ENCODE measurements at regions of chr2 and their contacts with region 1.

Region 1: GRCh38 chr2:54106631-54107454 is 8.6 kb upstream of the ACYP2 start:
- DNase-seq: peak; percentile 84
- H3K4me3 ChIP-seq: no peak overlapping the region
- H3K27ac ChIP-seq: peak overlapping the region; percentile 50
- H3K4me1 ChIP-seq: peaks cover 72% of the 10 kb centered on the region
- CTCF ChIP-seq: peak; percentile 98

Region 2: DNA sequence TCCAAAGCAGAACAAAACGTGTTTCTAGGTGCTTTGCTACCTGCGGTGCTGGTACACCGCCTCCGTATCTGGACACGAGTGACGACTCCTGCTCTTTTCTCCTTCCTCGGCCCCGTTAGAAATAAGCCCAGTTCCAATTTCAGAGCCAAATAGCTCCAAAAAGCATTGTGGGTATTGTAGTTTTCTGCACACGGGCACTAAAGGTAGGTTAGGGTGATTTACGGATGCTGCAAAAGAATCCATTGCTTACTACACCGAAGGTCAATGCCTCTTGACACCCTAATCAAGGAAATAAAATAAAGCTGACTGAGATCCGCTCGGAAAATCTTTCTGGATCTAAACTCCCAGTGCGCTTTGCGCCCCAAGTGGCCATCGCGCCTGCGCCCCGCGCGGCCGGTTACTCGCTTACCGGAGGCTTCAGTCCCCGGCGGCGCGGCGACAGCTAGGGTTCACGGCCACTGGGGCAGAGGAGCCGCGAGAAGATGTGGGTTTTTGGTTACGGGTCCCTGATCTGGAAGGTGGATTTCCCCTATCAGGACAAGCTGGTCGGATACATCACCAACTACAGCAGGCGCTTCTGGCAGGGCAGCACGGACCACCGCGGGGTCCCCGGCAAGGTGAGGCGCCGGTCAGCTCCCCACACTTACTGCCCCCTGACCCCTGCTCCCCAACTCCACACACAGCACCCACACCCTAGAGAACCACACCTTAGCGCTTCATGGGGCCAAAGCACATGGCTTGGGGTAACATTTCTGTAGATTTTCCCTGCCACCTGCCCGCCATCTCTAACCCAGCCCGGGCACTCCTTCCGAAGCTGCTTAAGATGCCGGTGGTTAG is 339.2 kb before region 1 on chr2 and contains the start of gene CHAC2:
- CTCF ChIA-PET with region 1: no interaction called
- POLR2A ChIA-PET with region 1: interaction called, 3 read pairs
- intact Hi-C with region 1: loop called (anchors 5 kb)
- DNase-seq: peak; percentile 91
- H3K4me3 ChIP-seq: peak within 1 kb of the TSS; percentile 84
- H3K27ac ChIP-seq: peak within 1 kb of the TSS; percentile 88
- H3K4me1 ChIP-seq: peaks cover 30% of the 10 kb centered on the region
- CTCF ChIP-seq: peak; percentile 43; the same call in 1 of the 2 replicates
- total RNA-seq, gene CHAC2: 15.9 and 17.0 TPM in 2 replicates

Region 3: GRCh38 chr2:53786705-53787612 is 319.9 kb before region 1 on chr2 and contains the starts of genes ASB3 and ERLEC1:
- CTCF ChIA-PET with region 1: interaction called, 3 read pairs
- POLR2A ChIA-PET with region 1: interaction called, 6 read pairs
- intact Hi-C with region 1: loop called (anchors 5 kb)
- DNase-seq: peak; percentile 93
- H3K4me3 ChIP-seq: peak within 1 kb of the TSS; percentile 94
- H3K27ac ChIP-seq: peak within 1 kb of the TSS; percentile 75
- H3K4me1 ChIP-seq: peaks cover 38% of the 10 kb centered on the region
- CTCF ChIP-seq: no peak
- total RNA-seq, gene ASB3: 25.0 and 26.4 TPM in 2 replicates
- total RNA-seq, gene ERLEC1: 22.7 and 26.9 TPM in 2 replicates

Region 4: DNA sequence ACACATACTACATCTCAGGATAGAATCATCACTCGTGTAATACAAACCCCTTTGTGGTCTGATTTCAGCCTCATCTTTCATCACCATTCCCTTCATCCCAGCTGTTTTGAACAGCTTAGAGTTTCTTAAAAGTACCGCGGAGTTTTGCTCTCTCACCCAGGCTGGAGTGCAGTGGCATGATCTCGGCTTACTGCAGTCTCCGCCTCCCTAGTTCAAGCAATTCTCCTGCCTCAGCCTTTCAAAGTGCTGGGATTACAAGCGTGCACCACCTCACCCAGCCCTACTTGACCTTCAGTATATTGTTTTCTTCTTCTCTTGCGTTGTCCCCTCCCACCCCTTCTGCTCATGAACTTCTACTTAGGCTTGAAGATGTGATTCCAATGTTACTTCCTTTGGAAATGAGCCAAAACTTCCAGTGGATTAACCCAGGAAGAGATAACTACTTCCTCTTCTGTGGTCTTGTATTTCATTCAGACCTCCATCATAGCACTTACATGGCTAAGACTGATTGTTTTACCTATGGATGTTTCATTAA is 304.2 kb before region 1 on chr2:
- CTCF ChIA-PET with region 1: no interaction called
- POLR2A ChIA-PET with region 1: no interaction called
- intact Hi-C with region 1: no loop called
- DNase-seq: no peak
- H3K4me3 ChIP-seq: no peak overlapping the region
- H3K27ac ChIP-seq: no peak overlapping the region
- H3K4me1 ChIP-seq: no peaks in the 10 kb centered on the region
- CTCF ChIP-seq: no peak

Region 5: GRCh38 chr2:53970724-53971602 is 135.9 kb before region 1 on chr2 and contains the start of gene PSME4:
- CTCF ChIA-PET with region 1: no interaction called
- POLR2A ChIA-PET with region 1: interaction called, 24 read pairs
- intact Hi-C with region 1: no loop called
- DNase-seq: peak; percentile 91
- H3K4me3 ChIP-seq: peak within 1 kb of the TSS; percentile 96
- H3K27ac ChIP-seq: peak within 1 kb of the TSS; percentile 60
- H3K4me1 ChIP-seq: peaks cover 24% of the 10 kb centered on the region
- CTCF ChIP-seq: no peak
- total RNA-seq, gene PSME4: 38.0 and 38.8 TPM in 2 replicates

Region 6: GRCh38 chr2:54000524-54000923 is 106.3 kb before region 1 on chr2:
- CTCF ChIA-PET with region 1: no interaction called
- POLR2A ChIA-PET with region 1: no interaction called
- intact Hi-C with region 1: no loop called
- DNase-seq: no peak
- H3K4me3 ChIP-seq: no peak overlapping the region
- H3K27ac ChIP-seq: no peak overlapping the region
- H3K4me1 ChIP-seq: peaks cover 15% of the 10 kb centered on the region
- CTCF ChIP-seq: no peak

Region 7: DNA sequence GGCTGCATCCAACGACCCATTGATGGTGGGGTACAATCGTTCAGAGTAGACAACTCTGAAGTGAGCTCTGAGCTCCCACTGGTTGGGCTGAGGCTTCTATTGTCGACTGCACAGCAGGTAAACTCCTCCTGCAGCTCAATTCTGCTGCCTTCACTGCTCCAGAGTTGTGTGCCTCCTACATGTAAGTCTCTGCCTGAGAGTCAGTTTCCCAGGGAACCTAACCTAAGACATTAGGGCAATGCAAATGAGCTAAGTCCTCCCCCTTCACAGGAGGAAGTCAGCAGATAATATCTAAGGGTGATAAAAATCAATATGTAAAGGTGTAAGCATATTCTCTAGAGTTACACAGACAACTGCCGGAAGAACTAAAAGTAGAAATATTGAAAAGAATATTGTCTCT is 13.9 kb before region 1 on chr2:
- CTCF ChIA-PET with region 1: interaction called, 18 read pairs
- POLR2A ChIA-PET with region 1: interaction called, 67 read pairs
- intact Hi-C with region 1: no loop called
- DNase-seq: peak; percentile 79
- H3K4me3 ChIP-seq: peak overlapping the region; percentile 62
- H3K27ac ChIP-seq: peak overlapping the region; percentile 96
- H3K4me1 ChIP-seq: peaks cover 74% of the 10 kb centered on the region
- CTCF ChIP-seq: no peak

Region 8: DNA sequence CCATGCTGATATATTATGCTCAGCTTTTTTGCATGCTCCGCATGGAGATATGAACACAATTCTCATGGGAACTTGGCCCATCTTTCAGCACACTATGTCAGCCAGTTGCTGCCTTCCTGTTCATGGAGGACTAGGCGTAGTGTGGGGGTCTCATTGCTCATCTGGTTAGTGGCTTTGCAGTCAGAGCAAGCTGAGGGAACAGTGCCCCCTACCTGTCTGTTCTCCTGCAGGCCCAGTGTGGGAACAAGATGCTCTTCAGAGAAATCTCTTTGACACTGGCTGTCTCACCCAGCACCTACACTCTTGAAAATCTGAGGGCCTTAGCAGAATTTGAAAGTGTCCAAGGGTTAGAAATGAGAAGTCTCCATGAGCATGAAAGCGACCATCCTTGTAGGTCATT is 396.3 kb after region 1 on chr2:
- CTCF ChIA-PET with region 1: interaction called, 7 read pairs
- POLR2A ChIA-PET with region 1: interaction called, 5 read pairs
- intact Hi-C with region 1: loop called (anchors 1 kb)
- DNase-seq: peak; percentile 75
- H3K4me3 ChIP-seq: no peak overlapping the region
- H3K27ac ChIP-seq: no peak overlapping the region
- H3K4me1 ChIP-seq: peaks cover 12% of the 10 kb centered on the region
- CTCF ChIP-seq: peak; percentile 93

Region 9: GRCh38 chr2:54522624-54523281 is 415.9 kb after region 1 on chr2:
- CTCF ChIA-PET with region 1: no interaction called
- POLR2A ChIA-PET with region 1: no interaction called
- intact Hi-C with region 1: loop called (anchors 2 kb)
- DNase-seq: peak; percentile 89
- H3K4me3 ChIP-seq: no peak overlapping the region
- H3K27ac ChIP-seq: no peak overlapping the region
- H3K4me1 ChIP-seq: peaks cover 15% of the 10 kb centered on the region
- CTCF ChIP-seq: peak; percentile 93

Measured in OCI-LY7 (cell line).